IMR-90 (cell line): ENCODE measurements at regions of chr17 and their contacts with region 1.

Region 1: DNA sequence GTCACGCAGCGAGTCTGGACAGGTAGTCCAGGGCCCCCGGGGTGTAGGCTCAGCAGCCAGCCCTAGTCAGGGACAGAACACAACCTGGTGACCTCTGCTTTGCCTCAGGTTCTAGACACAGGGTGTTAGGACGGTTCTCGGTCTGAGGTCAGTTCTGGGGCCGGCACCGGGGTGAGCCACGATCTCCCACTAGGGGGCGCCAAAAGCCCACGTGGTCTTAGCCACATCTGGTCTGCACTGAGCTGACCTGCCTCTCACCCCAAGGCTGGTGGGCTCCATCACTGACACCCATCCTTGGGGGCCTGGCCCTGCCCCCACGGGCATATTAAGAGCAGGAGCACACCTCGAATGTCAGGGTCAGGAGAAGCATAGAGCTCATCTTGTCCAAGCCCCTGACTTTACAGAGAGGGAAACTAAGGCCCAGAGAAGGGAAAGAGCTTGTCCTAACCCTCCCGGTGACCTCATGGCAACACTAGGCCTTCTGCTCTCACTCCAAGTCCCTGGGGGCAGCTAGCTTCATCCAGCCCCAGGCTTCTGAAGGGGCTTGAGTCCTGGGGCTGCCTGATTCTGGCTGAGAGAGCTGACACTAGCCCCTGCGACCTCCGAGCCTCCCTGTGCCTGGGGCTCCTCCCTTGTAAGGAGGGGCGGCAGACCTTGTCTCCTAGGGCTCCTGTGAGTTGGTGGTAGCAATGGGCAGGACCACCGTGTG is 9.0 kb downstream of the SLC5A10 start:
- DNase-seq: peak; percentile 50
- ATAC-seq: peak; percentile 93
- H3K4me3 ChIP-seq: no peak overlapping the region
- H3K27ac ChIP-seq: no peak overlapping the region
- H3K4me1 ChIP-seq: peaks cover 12% of the 10 kb centered on the region
- H3K27me3 ChIP-seq: no peaks in the 10 kb centered on the region
- CTCF ChIP-seq: peak; percentile 92
- POLR2A ChIP-seq: 0 out of 2 replicates have a peak, but pooled peaks have one; percentile 39
- RAD21 ChIP-seq: peak; percentile 94

Region 2: DNA sequence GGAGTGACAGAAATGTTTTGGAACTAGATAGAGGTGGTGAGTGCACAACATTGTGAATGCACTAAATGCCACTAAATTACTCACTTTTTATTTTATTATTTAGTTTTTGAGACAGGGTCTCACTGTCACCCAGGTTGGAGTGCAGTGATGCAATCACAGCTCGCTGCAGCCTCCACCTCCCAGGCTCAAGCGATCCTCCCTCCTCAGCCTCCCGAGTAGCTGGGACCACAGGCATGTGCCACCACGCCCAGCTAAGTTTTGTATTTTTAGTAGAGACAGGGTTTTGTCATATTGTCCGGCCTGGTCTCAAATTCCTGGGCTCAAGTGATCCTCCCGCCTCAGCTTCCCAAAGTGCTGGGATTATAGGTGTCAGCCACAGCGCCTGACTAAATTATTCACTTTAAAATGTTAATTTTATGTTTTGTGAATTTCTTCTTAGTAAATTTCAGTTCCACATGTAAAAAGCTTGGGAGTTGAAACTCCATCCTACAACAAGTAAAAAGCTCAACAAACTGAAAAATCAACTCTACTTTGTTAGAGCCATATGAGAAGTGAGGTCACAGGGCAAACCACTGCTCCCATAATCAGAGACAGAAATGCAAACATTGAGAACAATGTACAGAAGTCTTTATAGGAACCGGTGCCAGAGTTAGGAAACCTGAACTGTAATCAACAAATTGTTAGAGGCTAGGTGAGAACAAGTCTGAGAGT is 22.8 kb before region 1 on chr17:
- CTCF ChIA-PET with region 1: no interaction called
- POLR2A ChIA-PET with region 1: no interaction called
- dilution Hi-C with region 1: no loop called
- in situ Hi-C with region 1: no loop called
- intact Hi-C with region 1: no loop called
- DNase-seq: peak; percentile 12
- ATAC-seq: peak; percentile 24; the same call in 1 of the 2 replicates
- H3K4me3 ChIP-seq: no peak overlapping the region
- H3K27ac ChIP-seq: no peak overlapping the region
- H3K4me1 ChIP-seq: no peaks in the 10 kb centered on the region
- H3K27me3 ChIP-seq: peaks cover 2% of the 10 kb centered on the region
- CTCF ChIP-seq: no peak
- POLR2A ChIP-seq: no peak
- RAD21 ChIP-seq: no peak

Region 3: GRCh38 chr17:18988546-18989173 is 27.7 kb after region 1 on chr17:
- CTCF ChIA-PET with region 1: no interaction called
- POLR2A ChIA-PET with region 1: no interaction called
- dilution Hi-C with region 1: no loop called
- in situ Hi-C with region 1: no loop called
- intact Hi-C with region 1: no loop called
- DNase-seq: no peak
- ATAC-seq: no peak
- H3K4me3 ChIP-seq: no peak overlapping the region
- H3K27ac ChIP-seq: no peak overlapping the region
- H3K4me1 ChIP-seq: peaks cover 2% of the 10 kb centered on the region; the same call in 1 of the 2 replicates
- H3K27me3 ChIP-seq: no peaks in the 10 kb centered on the region
- CTCF ChIP-seq: no peak
- POLR2A ChIP-seq: no peak
- RAD21 ChIP-seq: no peak

Region 4: GRCh38 chr17:19004421-19005136 is 43.6 kb after region 1 on chr17 and contains the start of gene FAM83G:
- CTCF ChIA-PET with region 1: interaction called, 5 read pairs
- POLR2A ChIA-PET with region 1: no interaction called
- dilution Hi-C with region 1: no loop called
- in situ Hi-C with region 1: no loop called
- intact Hi-C with region 1: loop called (anchors 2 kb)
- DNase-seq: peak; percentile 71
- ATAC-seq: peak; percentile 60
- H3K4me3 ChIP-seq: peak within 1 kb of the TSS; percentile 71
- H3K27ac ChIP-seq: peak within 1 kb of the TSS; percentile 73
- H3K4me1 ChIP-seq: peaks cover 31% of the 10 kb centered on the region
- H3K27me3 ChIP-seq: no peaks in the 10 kb centered on the region
- CTCF ChIP-seq: no peak
- POLR2A ChIP-seq: peak; percentile 48; the same call in 1 of the 2 replicates
- RAD21 ChIP-seq: no peak
- total RNA-seq, gene FAM83G: 9.5 and 10.3 TPM in 2 replicates